Activated B cell treated with CpG ODN at 0.5 μM for 24 hours (primary cell): ENCODE measurements at regions of chr14 and their contacts with region 1.

Region 1: DNA sequence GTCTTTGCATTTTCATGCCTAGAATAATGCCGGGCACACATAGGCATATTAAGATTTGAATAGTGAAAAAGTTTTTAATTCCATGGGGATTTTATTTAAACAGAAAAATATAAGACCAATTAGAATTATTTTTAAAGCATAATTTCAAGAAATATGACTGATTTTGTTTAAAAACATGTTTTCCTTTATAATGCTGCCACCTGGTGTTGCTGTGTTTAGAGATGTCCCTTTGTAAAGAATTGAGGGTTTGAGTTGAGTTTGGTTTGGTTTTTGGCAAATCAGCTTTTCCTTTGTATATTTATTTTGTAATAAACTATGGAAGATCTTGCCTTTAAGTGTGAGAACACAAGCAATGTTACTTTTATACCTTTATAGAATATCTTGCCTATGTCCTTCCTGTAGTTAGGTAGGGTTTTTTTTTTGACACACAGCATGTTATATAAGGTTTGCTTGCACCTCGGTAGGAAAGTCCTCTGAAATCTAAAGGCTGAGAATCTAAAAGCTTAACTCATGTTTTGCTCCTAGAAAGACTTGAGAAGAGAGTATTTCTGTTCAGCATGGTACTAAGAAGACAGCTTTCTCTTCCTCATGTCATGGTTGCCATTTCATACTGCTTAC is 31.4 kb upstream of the SNAPC1 start:
- DNase-seq: no peak
- ATAC-seq: no peak
- H3K4me3 Mint-ChIP-seq: no peak overlapping the region
- H3K27ac Mint-ChIP-seq: peak overlapping the region; percentile 57
- H3K4me1 Mint-ChIP-seq: peaks cover 41% of the 10 kb centered on the region
- H3K27me3 Mint-ChIP-seq: no peaks in the 10 kb centered on the region
- CTCF ChIP-seq: no peak

Region 2: DNA sequence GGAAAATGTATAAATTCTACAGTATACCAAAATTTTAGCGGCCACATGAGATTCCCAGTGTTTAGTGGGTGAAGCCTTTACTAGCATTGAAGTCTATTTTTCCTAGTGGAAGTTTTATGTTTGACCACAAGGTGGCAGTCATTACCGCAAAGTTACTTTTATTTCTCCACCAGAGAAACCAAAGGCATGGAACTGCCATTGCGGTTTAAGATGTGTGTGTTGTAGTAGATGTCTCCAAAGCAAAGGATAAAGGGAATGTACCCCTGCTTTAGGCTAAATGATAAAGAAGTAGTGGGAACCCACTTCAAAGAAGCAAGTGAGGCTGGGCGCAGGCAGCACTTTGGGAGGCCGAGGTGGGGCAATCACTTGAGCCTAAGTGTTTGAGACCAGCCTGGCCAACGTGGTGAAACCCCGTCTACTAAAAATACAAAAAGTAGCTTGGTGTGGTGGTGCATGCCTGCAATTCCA is 269.0 kb before region 1 on chr14:
- CTCF ChIA-PET with region 1: interaction called, 39 read pairs
- POLR2A ChIA-PET with region 1: interaction called, 4 read pairs
- intact Hi-C with region 1: loop called (anchors 1 kb)
- DNase-seq: no peak
- ATAC-seq: peak; percentile 68
- H3K4me3 Mint-ChIP-seq: no peak overlapping the region
- H3K27ac Mint-ChIP-seq: no peak overlapping the region
- H3K4me1 Mint-ChIP-seq: peaks cover 16% of the 10 kb centered on the region
- H3K27me3 Mint-ChIP-seq: no peaks in the 10 kb centered on the region
- CTCF ChIP-seq: no peak

Region 3: DNA sequence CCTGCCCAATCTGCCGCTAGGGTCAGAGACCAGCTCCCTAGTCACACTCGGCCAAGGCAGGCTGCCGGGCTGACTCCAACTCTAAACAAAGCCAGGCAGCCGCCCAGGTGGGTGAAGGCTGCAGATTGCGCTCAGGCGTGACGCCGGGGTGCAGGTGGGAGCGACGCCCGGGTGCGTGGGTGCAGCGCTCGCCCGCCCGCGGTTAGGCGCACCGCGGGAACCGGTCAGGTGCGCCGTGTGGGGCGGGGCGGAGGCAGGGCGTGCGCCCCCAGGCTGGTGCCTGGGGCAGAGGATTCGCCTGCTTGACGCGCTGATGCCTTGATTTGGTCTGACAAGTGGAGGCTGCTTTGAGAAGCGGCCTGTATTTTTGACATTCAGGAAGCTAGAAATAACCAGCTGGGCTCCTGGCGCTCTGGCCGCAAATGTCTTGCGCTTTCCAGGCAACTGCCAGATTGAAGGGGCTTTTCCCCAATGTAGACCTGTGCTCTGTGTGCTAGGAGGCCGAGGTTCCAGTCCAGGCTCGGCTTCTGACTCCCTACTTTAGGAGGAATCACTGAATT is 162.2 kb before region 1 on chr14:
- CTCF ChIA-PET with region 1: no interaction called
- POLR2A ChIA-PET with region 1: interaction called, 4 read pairs
- intact Hi-C with region 1: loop called (anchors 1 kb)
- DNase-seq: peak; percentile 74
- ATAC-seq: peak; percentile 89
- H3K4me3 Mint-ChIP-seq: peak overlapping the region; percentile 83
- H3K27ac Mint-ChIP-seq: peak overlapping the region; percentile 80
- H3K4me1 Mint-ChIP-seq: peaks cover 58% of the 10 kb centered on the region
- H3K27me3 Mint-ChIP-seq: no peaks in the 10 kb centered on the region
- CTCF ChIP-seq: no peak